A549 (cell line): ENCODE measurements at regions of chr9 and their contacts with region 1.

Region 1: GRCh38 chr9:116149844-116150243 is 3.7 kb upstream of the PAPPA start:
- DNase-seq: peak in 1 of 2 experiments; percentile 76
- ATAC-seq: peak in 1 of 2 experiments; percentile 14; a peak in 2 of 6 replicates
- H3K4me3 ChIP-seq: no peak overlapping the region
- H3K27ac ChIP-seq: peak overlapping the region; percentile 87 to 99
- H3K4me1 ChIP-seq: peaks cover 55% of the 10 kb centered on the region
- CTCF ChIP-seq: peak; percentile 46; the same call in 2 of the 3 replicates
- EP300 ChIP-seq: no peak
- POLR2A ChIP-seq: no peak
- RAD21 ChIP-seq: peak; percentile 41 to 51

Region 2: GRCh38 chr9:115923903-115924668 is 225.8 kb before region 1 on chr9:
- CTCF ChIA-PET with region 1: interaction called, 4 read pairs
- POLR2A ChIA-PET with region 1: interaction called, 13 read pairs
- DNase-seq: peak; percentile 67 to 97
- ATAC-seq: peak; percentile 95 to 100
- H3K4me3 ChIP-seq: no peak overlapping the region
- H3K27ac ChIP-seq: peak overlapping the region; percentile 90 to 97
- H3K4me1 ChIP-seq: peaks cover 30% of the 10 kb centered on the region
- CTCF ChIP-seq: no peak
- EP300 ChIP-seq: peak; percentile 98 to 99
- POLR2A ChIP-seq: no peak
- RAD21 ChIP-seq: peak; percentile 36 to 86

Region 3: DNA sequence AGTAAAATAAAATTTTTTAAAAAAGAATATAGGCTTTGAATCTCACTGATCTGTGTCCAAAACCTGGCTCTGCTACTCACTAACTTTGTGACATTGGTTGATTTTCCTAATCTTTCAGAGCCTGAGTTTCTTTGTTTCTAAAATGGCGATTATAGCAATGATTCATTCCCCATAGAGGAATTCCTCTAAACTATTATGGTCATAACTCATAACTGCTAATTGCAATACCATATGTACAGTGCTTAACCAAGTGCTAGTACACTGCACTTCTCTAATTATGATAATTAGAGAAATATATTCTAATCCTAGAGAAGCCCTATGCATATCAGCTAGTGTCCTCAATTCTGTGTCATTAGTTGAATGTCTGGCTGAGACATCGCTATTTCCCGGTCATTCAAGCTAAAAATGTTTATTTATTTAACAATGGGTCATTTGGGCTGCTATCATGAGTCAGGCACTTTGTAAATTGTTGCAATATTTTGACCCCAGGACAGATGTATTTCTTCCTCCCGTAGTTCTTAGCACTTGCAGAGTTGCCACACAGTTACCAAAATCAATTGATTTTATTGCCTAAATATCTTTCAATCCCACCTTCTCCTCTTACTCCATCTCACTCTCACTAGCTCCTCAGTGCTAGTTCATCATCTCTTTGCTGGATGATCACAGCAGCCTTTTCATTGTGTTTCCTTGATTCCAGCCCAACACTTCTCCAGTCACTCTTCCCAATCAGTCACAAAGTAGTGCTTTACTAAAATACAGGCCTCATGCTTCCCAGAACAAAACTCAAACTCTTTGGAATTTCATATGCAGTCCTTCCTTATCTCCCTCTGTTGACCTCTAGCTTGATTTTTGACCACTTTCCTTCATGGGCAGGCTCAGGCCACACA is 197.2 kb before region 1 on chr9:
- CTCF ChIA-PET with region 1: interaction called, 11 read pairs
- POLR2A ChIA-PET with region 1: interaction called, 361 read pairs
- DNase-seq: peak; percentile 37 to 84
- ATAC-seq: peak; percentile 85 to 90
- H3K4me3 ChIP-seq: no peak overlapping the region
- H3K27ac ChIP-seq: peak overlapping the region; percentile 91 to 99
- H3K4me1 ChIP-seq: peaks cover 41% of the 10 kb centered on the region
- CTCF ChIP-seq: no peak
- EP300 ChIP-seq: peak; percentile 92 to 93; a peak in 4 of 5 replicates
- POLR2A ChIP-seq: no peak
- RAD21 ChIP-seq: peak; percentile 2 to 61; a peak in 3 of 5 replicates

Region 4: DNA sequence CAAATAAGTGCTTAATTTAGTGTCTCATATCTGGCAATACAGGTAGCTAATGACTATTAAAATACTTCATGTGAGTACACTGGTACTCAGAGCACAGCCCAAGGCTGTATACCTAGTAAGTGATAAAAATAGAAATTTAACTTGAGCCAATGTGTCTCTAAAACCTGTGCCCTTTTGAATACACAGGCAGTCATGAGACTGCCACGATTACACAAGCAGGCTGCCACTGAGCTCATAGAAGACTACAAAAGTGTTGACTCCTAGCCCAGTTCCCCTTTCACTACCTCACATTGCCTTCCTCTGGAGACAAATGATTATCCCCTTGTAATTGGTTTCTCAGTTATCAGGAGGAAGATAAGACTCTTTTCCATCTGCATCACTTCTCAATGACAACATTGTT is 62.6 kb before region 1 on chr9:
- CTCF ChIA-PET with region 1: no interaction called
- POLR2A ChIA-PET with region 1: interaction called, 34 read pairs
- DNase-seq: peak; percentile 8 to 71
- ATAC-seq: peak; percentile 79
- H3K4me3 ChIP-seq: no peak overlapping the region
- H3K27ac ChIP-seq: peak overlapping the region; percentile 77 to 84
- H3K4me1 ChIP-seq: peaks cover 28% of the 10 kb centered on the region
- CTCF ChIP-seq: no peak
- EP300 ChIP-seq: no peak
- POLR2A ChIP-seq: no peak
- RAD21 ChIP-seq: no peak

Region 5: DNA sequence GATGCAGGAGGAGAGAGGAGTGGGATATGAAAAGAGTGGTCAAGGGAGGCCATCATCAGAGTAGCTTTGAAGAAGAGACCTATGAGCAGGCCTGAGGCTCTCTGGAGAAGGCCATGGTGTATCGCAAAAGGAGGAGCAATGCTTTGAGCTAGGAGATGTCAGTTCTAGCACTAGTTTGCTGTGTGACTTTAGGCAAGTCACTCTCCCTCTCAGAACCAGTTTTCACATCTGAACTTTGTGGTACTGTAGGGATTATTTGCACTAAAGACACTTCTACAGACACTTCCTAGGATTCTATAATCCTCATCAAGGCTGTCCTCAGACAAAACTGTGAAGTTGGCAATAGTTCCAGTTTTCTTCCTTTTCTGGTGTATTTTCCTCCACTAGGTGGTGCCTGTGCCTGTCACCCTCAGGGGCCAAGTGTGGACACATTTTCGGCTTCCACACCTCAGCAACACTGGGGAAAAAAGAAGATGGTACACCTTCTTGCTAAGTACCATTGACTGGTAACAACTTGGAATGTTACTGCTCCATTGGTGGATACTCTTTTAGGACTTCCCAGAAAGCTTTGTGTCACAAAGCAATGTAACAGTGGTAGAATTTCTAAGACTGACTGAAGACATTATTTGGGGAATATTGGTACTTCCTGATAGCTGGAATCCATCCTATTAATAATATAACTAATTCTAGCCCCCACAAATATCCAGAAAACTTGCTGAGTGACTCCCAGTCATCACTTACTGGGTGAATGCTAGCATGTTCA is 13.6 kb after region 1 on chr9:
- CTCF ChIA-PET with region 1: interaction called, 12 read pairs
- POLR2A ChIA-PET with region 1: interaction called, 37 read pairs
- DNase-seq: no peak
- ATAC-seq: no peak
- H3K4me3 ChIP-seq: no peak overlapping the region
- H3K27ac ChIP-seq: peak overlapping the region; percentile 80 to 99; a peak in 5 of 6 replicates
- H3K4me1 ChIP-seq: peaks cover 100% of the 10 kb centered on the region
- CTCF ChIP-seq: peak; percentile 38; the same call in 2 of the 3 replicates
- EP300 ChIP-seq: no peak
- POLR2A ChIP-seq: no peak
- RAD21 ChIP-seq: peak; percentile 15 to 19; a peak in 1 of 5 replicates